Activated naive CD4-positive, alpha-beta T cell treated with anti-CD3 and anti-CD28 coated beads for 36 hours (primary cell): ENCODE measurements at regions of chr6 and their contacts with region 1.

Region 1: GRCh38 chr6:33391278-33391921 is at the start of gene KIFC1:
- DNase-seq: peak; percentile 100
- H3K4me3 Mint-ChIP-seq: peak within 1 kb of the TSS; percentile 82
- H3K27ac Mint-ChIP-seq: peak within 1 kb of the TSS; percentile 97
- H3K4me1 Mint-ChIP-seq: peaks cover 41% of the 10 kb centered on the region
- H3K27me3 Mint-ChIP-seq: no peaks in the 10 kb centered on the region
- total RNA-seq, gene KIFC1: 107 TPM

Region 2: GRCh38 chr6:33271458-33272274 is 119.7 kb before region 1 on chr6 and contains the starts of genes RPS18 and VPS52:
- CTCF ChIA-PET with region 1: interaction called, 3 read pairs
- intact Hi-C with region 1: loop called (anchors 1 kb)
- DNase-seq: peak; percentile 95
- H3K4me3 Mint-ChIP-seq: peak within 1 kb of the TSS; percentile 99
- H3K27ac Mint-ChIP-seq: peak within 1 kb of the TSS; percentile 100
- H3K4me1 Mint-ChIP-seq: peaks cover 45% of the 10 kb centered on the region
- H3K27me3 Mint-ChIP-seq: no peaks in the 10 kb centered on the region
- total RNA-seq, gene RPS18: 5,497 to 5,551 TPM
- total RNA-seq, gene VPS52: 30.3 to 31.0 TPM

Region 3: GRCh38 chr6:33410050-33410710 is 18.8 kb after region 1 on chr6:
- CTCF ChIA-PET with region 1: interaction called, 6 read pairs
- intact Hi-C with region 1: loop called (anchors 1 kb)
- DNase-seq: peak; percentile 98
- H3K4me3 Mint-ChIP-seq: peak overlapping the region; percentile 87
- H3K27ac Mint-ChIP-seq: peak overlapping the region; percentile 93
- H3K4me1 Mint-ChIP-seq: peaks cover 39% of the 10 kb centered on the region
- H3K27me3 Mint-ChIP-seq: no peaks in the 10 kb centered on the region

Region 4: DNA sequence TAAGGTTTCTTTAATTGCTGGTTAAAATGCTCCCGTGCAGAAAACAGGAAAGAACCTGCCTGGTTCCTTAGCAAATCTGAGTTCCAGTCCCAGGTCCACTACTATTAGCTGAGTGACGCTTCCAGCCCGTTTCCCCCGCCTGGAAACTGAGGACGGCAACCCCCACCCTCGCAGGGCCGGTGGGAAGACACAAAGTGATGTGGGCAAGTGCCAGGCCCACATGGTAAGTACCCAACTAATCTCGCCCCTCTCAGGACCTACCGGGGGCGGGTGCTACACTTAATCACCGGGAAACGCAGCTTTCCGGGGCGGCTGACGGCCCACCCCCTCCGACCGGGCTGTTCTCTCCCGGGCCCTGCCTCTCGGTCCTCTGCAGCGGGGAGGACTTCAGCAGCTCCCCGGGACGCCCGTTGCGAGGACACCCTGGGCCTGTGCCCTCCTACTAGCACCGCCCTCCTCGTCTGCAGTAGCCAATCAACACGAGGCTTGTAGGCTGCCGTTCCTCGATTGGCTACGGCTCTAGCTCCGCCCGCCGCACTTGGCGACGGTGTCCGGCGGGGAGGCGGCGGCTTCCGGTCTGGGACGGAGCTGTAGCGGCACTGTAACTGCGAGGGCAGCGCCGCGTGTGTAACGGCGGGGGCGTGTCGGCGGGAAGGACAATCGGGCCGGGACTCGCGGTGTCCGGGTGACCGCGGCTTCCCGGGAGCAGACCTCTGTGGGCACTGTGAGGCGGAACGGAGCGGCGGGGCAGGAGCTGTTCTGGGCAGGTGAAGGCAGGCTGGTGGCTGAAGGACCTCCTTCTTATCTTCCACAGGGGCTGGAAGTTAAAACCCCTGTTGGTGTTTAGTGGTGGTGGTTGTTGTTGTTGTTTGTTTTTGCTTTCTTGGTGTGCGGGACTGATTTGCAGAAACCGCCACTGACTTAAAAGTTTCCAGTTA is 62.9 kb after region 1 on chr6 and contains the start of gene ZBTB9:
- CTCF ChIA-PET with region 1: interaction called, 3 read pairs
- intact Hi-C with region 1: loop called (anchors 1 kb)
- DNase-seq: peak; percentile 96
- H3K4me3 Mint-ChIP-seq: peak within 1 kb of the TSS; percentile 87
- H3K27ac Mint-ChIP-seq: peak within 1 kb of the TSS; percentile 85
- H3K4me1 Mint-ChIP-seq: peaks cover 47% of the 10 kb centered on the region
- H3K27me3 Mint-ChIP-seq: no peaks in the 10 kb centered on the region
- total RNA-seq, gene ZBTB9: 5.0 to 6.5 TPM

Region 5: GRCh38 chr6:33620856-33621710 is 229.7 kb after region 1 on chr6 and contains the start of gene ITPR3:
- CTCF ChIA-PET with region 1: no interaction called
- intact Hi-C with region 1: loop called (anchors 1 kb)
- DNase-seq: peak; percentile 77
- H3K4me3 Mint-ChIP-seq: peak within 1 kb of the TSS; percentile 89
- H3K27ac Mint-ChIP-seq: peak within 1 kb of the TSS; percentile 78
- H3K4me1 Mint-ChIP-seq: peaks cover 53% of the 10 kb centered on the region
- H3K27me3 Mint-ChIP-seq: no peaks in the 10 kb centered on the region
- total RNA-seq, gene ITPR3: 34.8 to 35.1 TPM